Left cardiac atrium (tissue), 4 donors: ENCODE measurements at regions of chr14 and their contacts with region 1.

Region 1: GRCh38 chr14:104708606-104709268 is 15.3 kb upstream of the ADSS1 start:
- DNase-seq: peak; percentile 73
- ATAC-seq: peak; percentile 69 to 75

Region 2: DNA sequence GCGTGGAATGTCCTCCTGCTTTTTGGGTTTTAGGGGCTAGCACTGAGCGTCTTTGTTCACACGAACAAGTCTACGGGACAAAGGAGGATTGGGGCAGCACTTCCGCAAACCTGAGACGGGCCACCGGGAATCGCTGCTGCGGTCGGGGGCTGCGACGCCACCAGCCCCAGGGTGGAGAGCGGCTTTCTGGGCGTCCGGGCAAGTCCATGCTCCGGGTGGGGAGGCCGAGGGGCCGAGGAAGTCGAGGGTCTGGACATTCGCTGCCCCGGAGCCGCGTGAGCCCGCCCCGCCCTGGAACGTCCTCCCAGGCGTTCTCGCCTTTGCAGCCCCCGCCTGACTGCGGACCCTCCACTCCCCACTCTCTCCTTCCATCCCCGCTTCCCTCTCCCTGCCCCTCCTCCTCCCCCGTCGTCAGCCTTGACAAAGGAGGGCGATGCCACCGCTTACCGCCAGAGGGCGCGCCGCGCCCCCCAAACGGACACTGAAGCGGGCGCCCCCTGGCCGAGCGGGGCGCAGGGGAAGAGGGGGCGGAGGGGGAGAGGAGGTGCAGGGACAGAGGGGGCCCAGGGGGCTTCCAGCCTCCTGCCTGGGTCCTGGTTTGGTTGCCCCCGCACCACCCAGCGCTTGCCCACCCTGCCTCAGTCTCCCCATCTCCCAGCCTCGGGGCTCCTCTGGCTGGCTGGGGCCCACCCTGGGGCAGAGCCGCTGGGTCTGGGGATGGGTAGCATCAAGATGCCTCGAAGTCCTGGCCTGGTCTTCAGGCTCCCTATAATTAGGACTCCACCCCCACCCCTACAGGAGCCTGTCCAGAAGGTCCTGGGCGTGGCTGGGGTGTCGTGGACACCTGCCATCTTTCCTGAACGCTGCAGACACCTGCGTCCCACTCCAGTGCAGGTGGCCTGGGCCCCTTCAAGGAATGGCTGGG is 58.4 kb before region 1 on chr14:
- intact Hi-C with region 1: loop called (anchors 5 kb)
- DNase-seq: peak; percentile 66
- ATAC-seq: peak; percentile 87 to 92

Region 3: GRCh38 chr14:104665657-104666522 is 42.8 kb before region 1 on chr14:
- intact Hi-C with region 1: loop called (anchors 5 kb)
- DNase-seq: no peak
- ATAC-seq: peak; percentile 83 to 84